Heart right ventricle (tissue), 16 donors: ENCODE measurements at regions of chr6 and their contacts with region 1.

Region 1: GRCh38 chr6:27893059-27893835 is 18.9 kb downstream of the OR2B2 start:
- DNase-seq: peak; percentile 56 to 77
- ATAC-seq: peak; percentile 39 to 69 (median 52)
- H3K4me3 ChIP-seq: peak overlapping the region; percentile 26 to 93 (median 64)
- H3K27ac ChIP-seq: peak overlapping the region in 7 of 10 donors; percentile 17 to 92 (median 38)
- H3K4me1 ChIP-seq: peaks cover 0 to 49% (median 28%) of the 10 kb centered on the region in 9 donors
- H3K27me3 ChIP-seq: peaks cover 0 to 48% (median 45%) of the 10 kb centered on the region in 7 donors
- CTCF ChIP-seq: no peak

Region 2: GRCh38 chr6:27126815-27127537 is 766.3 kb before region 1 on chr6:
- intact Hi-C with region 1: loop called in 2 of 10 experiments (anchors 10 kb)
- DNase-seq: peak; percentile 84 to 94
- ATAC-seq: peak; percentile 88 to 95 (median 91)
- H3K4me3 ChIP-seq: peak overlapping the region in 9 of 10 donors; percentile 2 to 53 (median 46)
- H3K27ac ChIP-seq: peak overlapping the region in 9 of 10 donors; percentile 12 to 83 (median 66)
- H3K4me1 ChIP-seq: peaks cover 0 to 25% (median 6%) of the 10 kb centered on the region in 9 donors
- H3K27me3 ChIP-seq: no peaks in the 10 kb centered on the region
- CTCF ChIP-seq: peak; percentile 68 to 96 (median 87)

Region 3: GRCh38 chr6:27177485-27178406 is 715.5 kb before region 1 on chr6:
- intact Hi-C with region 1: loop called in 5 of 10 experiments (anchors 5 to 10 kb)
- DNase-seq: peak; percentile 62 to 65
- ATAC-seq: peak; percentile 73 to 94 (median 86)
- H3K4me3 ChIP-seq: peak overlapping the region; percentile 73 to 100 (median 87)
- H3K27ac ChIP-seq: peak overlapping the region in 9 of 10 donors; percentile 23 to 84 (median 61)
- H3K4me1 ChIP-seq: peaks cover 0 to 20% (median 7%) of the 10 kb centered on the region in 9 donors
- H3K27me3 ChIP-seq: peaks cover 0 to 16% (median 8%) of the 10 kb centered on the region in 7 donors
- CTCF ChIP-seq: peak in 7 of 9 donors; percentile 19 to 62 (median 48)

Region 4: GRCh38 chr6:27479319-27480182 is 413.7 kb before region 1 on chr6:
- intact Hi-C with region 1: loop called in 5 of 10 experiments (anchors 2 to 10 kb)
- DNase-seq: peak; percentile 76 to 79
- ATAC-seq: peak; percentile 93 to 97 (median 95)
- H3K4me3 ChIP-seq: peak overlapping the region; percentile 51 to 85 (median 72)
- H3K27ac ChIP-seq: peak overlapping the region; percentile 86 to 97 (median 96)
- H3K4me1 ChIP-seq: peaks cover 0 to 21% (median 8%) of the 10 kb centered on the region in 9 donors
- H3K27me3 ChIP-seq: no peaks in the 10 kb centered on the region
- CTCF ChIP-seq: no peak

Region 5: DNA sequence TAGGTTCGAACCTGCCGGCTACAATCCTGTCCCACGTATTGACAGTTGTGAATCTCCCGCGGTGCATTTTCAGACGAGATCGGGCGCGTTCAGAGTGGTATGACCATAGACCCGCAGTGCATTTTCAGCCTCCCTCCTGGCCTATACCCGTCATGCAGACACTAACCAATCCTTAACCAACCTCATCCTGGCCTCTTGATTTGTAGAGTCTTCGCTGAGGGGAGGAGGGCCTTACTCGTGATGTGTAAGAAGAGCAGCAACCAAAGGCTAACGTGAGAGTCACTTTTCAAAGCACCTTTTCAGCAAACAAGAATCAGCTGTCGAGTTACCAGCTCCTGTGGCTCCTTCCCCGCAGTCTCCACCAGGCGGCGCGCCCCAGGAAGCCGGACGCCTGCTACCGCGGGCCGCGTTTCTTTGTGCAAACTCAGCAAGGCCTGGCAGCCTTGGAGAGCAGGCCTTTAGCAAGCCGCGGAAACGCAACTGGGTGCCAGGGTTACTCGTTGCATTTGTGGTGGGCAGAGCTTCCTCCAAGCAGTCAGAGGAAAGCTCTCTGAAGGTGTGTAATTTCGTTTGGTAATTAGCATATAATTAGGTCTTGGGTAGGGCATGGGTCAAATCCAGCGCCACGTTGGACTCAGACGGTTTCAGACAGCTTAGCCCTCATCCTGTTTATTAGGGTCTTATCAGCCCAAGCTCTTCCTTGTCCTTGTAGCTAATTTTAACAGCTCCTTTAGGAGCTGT is 120.8 kb before region 1 on chr6:
- intact Hi-C with region 1: loop called (anchors 1 to 10 kb)
- DNase-seq: peak; percentile 78 to 88
- ATAC-seq: peak; percentile 78 to 98 (median 94)
- H3K4me3 ChIP-seq: peak overlapping the region in 2 of 10 donors; percentile 5 to 14
- H3K27ac ChIP-seq: no peak overlapping the region
- H3K4me1 ChIP-seq: peaks cover 0 to 18% (median 5%) of the 10 kb centered on the region in 9 donors
- H3K27me3 ChIP-seq: peaks cover 7 to 83% (median 70%) of the 10 kb centered on the region in 7 donors
- CTCF ChIP-seq: peak; percentile 82 to 96 (median 93)

Region 6: DNA sequence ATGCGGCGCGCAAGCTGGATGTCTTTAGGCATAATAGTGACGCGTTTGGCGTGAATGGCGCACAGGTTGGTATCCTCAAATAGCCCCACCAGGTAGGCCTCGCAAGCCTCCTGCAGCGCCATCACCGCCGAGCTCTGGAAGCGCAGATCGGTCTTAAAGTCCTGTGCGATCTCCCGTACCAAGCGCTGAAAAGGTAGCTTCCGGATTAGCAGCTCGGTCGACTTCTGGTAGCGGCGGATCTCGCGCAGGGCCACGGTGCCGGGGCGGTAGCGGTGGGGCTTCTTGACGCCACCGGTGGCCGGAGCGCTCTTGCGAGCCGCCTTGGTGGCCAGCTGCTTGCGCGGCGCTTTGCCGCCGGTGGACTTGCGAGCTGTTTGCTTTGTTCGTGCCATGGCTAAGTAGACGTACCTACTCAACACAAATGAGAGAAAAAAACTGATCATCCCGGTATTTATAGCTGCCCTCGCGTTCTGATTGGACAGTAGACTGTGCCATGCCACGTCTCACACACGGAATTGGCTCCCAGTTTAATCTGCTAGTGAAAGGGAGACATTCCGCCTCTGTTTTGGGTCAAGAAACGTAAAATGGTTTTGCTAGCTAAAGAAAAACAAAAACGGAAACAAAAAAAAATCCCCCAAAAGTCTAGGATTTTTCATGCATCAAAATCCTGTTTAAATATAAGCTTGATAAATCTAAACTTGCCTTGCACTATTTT is 21.2 kb before region 1 on chr6:
- intact Hi-C with region 1: loop called in 1 of 10 experiments (anchors 2 kb)
- DNase-seq: peak; percentile 36 to 78
- ATAC-seq: peak; percentile 78 to 93 (median 88)
- H3K4me3 ChIP-seq: peak overlapping the region; percentile 40 to 70 (median 56)
- H3K27ac ChIP-seq: peak overlapping the region in 9 of 10 donors; percentile 15 to 94 (median 60)
- H3K4me1 ChIP-seq: peaks cover 4 to 45% (median 17%) of the 10 kb centered on the region in 9 donors
- H3K27me3 ChIP-seq: peaks cover 10 to 86% (median 75%) of the 10 kb centered on the region in 7 donors
- CTCF ChIP-seq: peak in 1 of 9 donors; percentile 27